PC-9 (cell line): ENCODE measurements at regions of chr2 and their contacts with region 1.

Region 1: GRCh38 chr2:222518570-222519381 is 94.4 kb downstream of the SGPP2 start:
- DNase-seq: peak; percentile 64 to 99
- H3K4me3 ChIP-seq: peak overlapping the region; percentile 10; the same call in 1 of the 2 replicates
- H3K27ac ChIP-seq: peak overlapping the region; percentile 80
- H3K4me1 ChIP-seq: peaks cover 37% of the 10 kb centered on the region
- H3K27me3 ChIP-seq: no peaks in the 10 kb centered on the region
- CTCF ChIP-seq: no peak

Region 2: GRCh38 chr2:222336439-222336838 is 182.3 kb before region 1 on chr2:
- CTCF ChIA-PET with region 1: no interaction called
- POLR2A ChIA-PET with region 1: no interaction called
- intact Hi-C with region 1: no loop called
- DNase-seq: no peak
- H3K4me3 ChIP-seq: no peak overlapping the region
- H3K27ac ChIP-seq: no peak overlapping the region
- H3K4me1 ChIP-seq: no peaks in the 10 kb centered on the region
- H3K27me3 ChIP-seq: no peaks in the 10 kb centered on the region
- CTCF ChIP-seq: no peak

Region 3: DNA sequence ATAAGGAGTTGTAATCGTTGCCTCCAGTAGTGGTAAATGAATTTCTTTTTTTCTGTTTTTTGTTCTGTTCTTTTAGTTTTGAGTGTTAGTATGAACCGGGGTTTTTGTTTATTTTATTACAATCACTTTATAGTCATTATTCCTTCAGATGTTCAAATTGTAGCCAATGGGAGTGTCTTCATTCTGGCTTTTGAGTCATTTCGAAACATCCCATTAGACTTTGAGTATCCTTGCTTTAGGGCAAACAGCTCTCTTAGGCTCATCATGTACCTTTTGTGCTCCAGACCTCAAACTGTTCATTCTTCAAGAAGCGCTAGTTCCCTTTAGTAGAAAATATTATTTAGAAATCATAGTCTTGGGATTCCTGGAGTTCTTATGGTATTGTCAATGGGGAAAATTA is 165.8 kb before region 1 on chr2:
- CTCF ChIA-PET with region 1: interaction called, 11 read pairs
- POLR2A ChIA-PET with region 1: no interaction called
- intact Hi-C with region 1: no loop called
- DNase-seq: no peak
- H3K4me3 ChIP-seq: no peak overlapping the region
- H3K27ac ChIP-seq: no peak overlapping the region
- H3K4me1 ChIP-seq: no peaks in the 10 kb centered on the region
- H3K27me3 ChIP-seq: no peaks in the 10 kb centered on the region
- CTCF ChIP-seq: no peak

Region 4: GRCh38 chr2:222572751-222573174 is 54.0 kb after region 1 on chr2:
- CTCF ChIA-PET with region 1: no interaction called
- POLR2A ChIA-PET with region 1: interaction called, 3 read pairs
- intact Hi-C with region 1: loop called (anchors 2 kb)
- DNase-seq: no peak
- H3K4me3 ChIP-seq: peak overlapping the region; percentile 3; the same call in 1 of the 2 replicates
- H3K27ac ChIP-seq: peak overlapping the region; percentile 87
- H3K4me1 ChIP-seq: peaks cover 65% of the 10 kb centered on the region
- H3K27me3 ChIP-seq: no peaks in the 10 kb centered on the region
- CTCF ChIP-seq: no peak

Region 5: GRCh38 chr2:222655787-222656525 is 137.2 kb after region 1 on chr2 and contains the start of gene FARSB:
- CTCF ChIA-PET with region 1: no interaction called
- POLR2A ChIA-PET with region 1: no interaction called
- intact Hi-C with region 1: no loop called
- DNase-seq: peak; percentile 97 to 98
- H3K4me3 ChIP-seq: peak within 1 kb of the TSS; percentile 78
- H3K27ac ChIP-seq: peak within 1 kb of the TSS; percentile 45
- H3K4me1 ChIP-seq: peaks cover 27% of the 10 kb centered on the region
- H3K27me3 ChIP-seq: no peaks in the 10 kb centered on the region
- CTCF ChIP-seq: no peak
- total RNA-seq, gene FARSB: 37.5 and 50.2 TPM in 2 replicates

Region 6: GRCh38 chr2:223222403-223222802 is 703.6 kb after region 1 on chr2:
- CTCF ChIA-PET with region 1: no interaction called
- POLR2A ChIA-PET with region 1: no interaction called
- intact Hi-C with region 1: no loop called
- DNase-seq: peak; percentile 16 to 79
- H3K4me3 ChIP-seq: no peak overlapping the region
- H3K27ac ChIP-seq: peak overlapping the region; percentile 40
- H3K4me1 ChIP-seq: peaks cover 35% of the 10 kb centered on the region
- H3K27me3 ChIP-seq: no peaks in the 10 kb centered on the region
- CTCF ChIP-seq: no peak

Region 7: GRCh38 chr2:223760838-223761502 is 1242.2 kb after region 1 on chr2:
- CTCF ChIA-PET with region 1: no interaction called
- POLR2A ChIA-PET with region 1: no interaction called
- intact Hi-C with region 1: no loop called
- DNase-seq: peak; percentile 91 to 99
- H3K4me3 ChIP-seq: peak overlapping the region; percentile 42; the same call in 1 of the 2 replicates
- H3K27ac ChIP-seq: peak overlapping the region; percentile 96
- H3K4me1 ChIP-seq: peaks cover 42% of the 10 kb centered on the region
- H3K27me3 ChIP-seq: no peaks in the 10 kb centered on the region
- CTCF ChIP-seq: peak; percentile 60